Activated T-helper 1 cell treated with anti-CD3 and anti-CD28 coated beads, Interleukin-12 subunit alpha, Interleukin-12 subunit beta, Interleukin-2, Interleukin-4 antibody, amounts not matched to agents 30 ng/mL and 10 ng/mL and 1 ng/mL, durations not matched to agents 14 hours and 24 hours and 36 hours (primary cell): ENCODE measurements at regions of chr1 and their contacts with region 1.

Region 1: GRCh38 chr1:224113918-224114786 is at the start of gene FBXO28:
- DNase-seq: peak; percentile 90
- H3K4me3 Mint-ChIP-seq: peak within 1 kb of the TSS; percentile 91
- H3K27ac Mint-ChIP-seq: peak within 1 kb of the TSS; percentile 89
- H3K4me1 Mint-ChIP-seq: peaks cover 27% of the 10 kb centered on the region
- H3K27me3 Mint-ChIP-seq: peaks cover 19% of the 10 kb centered on the region
- total RNA-seq, gene FBXO28: 29.3 and 32.2 TPM in 2 replicates

Region 2: GRCh38 chr1:223726380-223727001 is 387.7 kb before region 1 on chr1:
- intact Hi-C with region 1: loop called (anchors 10 kb)
- DNase-seq: peak; percentile 86
- H3K4me3 Mint-ChIP-seq: peak overlapping the region; percentile 77
- H3K27ac Mint-ChIP-seq: peak overlapping the region; percentile 95
- H3K4me1 Mint-ChIP-seq: peaks cover 85% of the 10 kb centered on the region
- H3K27me3 Mint-ChIP-seq: no peaks in the 10 kb centered on the region

Region 3: GRCh38 chr1:224168859-224169380 is 54.8 kb after region 1 on chr1:
- intact Hi-C with region 1: loop called (anchors 1 kb)
- DNase-seq: peak; percentile 59
- H3K4me3 Mint-ChIP-seq: peak overlapping the region; percentile 60
- H3K27ac Mint-ChIP-seq: peak overlapping the region; percentile 76
- H3K4me1 Mint-ChIP-seq: peaks cover 38% of the 10 kb centered on the region
- H3K27me3 Mint-ChIP-seq: peaks cover 2% of the 10 kb centered on the region

Region 4: DNA sequence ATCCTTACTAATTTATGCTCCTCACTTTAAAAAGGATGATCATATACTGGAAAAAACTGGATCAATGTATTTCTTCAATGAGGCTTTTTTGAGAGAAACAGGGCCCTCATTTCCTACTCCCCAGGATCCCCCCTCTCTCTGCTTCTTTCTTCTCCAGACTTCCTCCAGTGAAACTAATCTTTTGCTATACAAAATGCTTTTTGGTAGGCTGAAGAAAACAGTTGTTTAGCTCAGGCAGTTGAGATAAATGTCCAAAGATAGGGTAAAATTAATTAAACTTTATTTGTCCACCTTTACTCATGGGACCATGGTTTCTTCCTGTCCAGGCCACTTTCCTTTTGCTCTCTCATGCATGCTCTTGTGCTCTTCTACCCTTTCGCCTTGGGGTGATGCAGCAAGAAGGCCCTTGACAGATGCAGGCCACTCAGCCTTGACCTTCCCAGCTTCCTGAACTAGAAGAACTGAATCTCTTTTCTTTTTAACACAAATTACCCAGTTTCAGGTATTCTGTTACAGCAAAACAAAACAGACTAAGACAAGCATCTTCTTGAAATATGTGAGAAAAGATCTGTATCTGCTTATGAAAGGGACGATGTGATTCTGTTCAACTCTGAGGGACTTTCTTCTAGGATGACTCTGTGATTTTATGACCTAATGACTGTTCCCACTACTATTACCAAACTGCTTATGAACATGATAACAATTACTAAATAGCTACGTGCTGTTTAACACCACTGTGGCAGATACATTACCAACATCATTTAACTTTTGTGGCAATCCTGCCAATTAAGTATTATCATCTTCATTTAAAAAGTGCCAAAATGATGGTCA is 152.2 kb after region 1 on chr1:
- intact Hi-C with region 1: loop called (anchors 10 kb)
- DNase-seq: no peak
- H3K4me3 Mint-ChIP-seq: no peak overlapping the region
- H3K27ac Mint-ChIP-seq: peak overlapping the region; percentile 69
- H3K4me1 Mint-ChIP-seq: peaks cover 42% of the 10 kb centered on the region
- H3K27me3 Mint-ChIP-seq: no peaks in the 10 kb centered on the region

Region 5: DNA sequence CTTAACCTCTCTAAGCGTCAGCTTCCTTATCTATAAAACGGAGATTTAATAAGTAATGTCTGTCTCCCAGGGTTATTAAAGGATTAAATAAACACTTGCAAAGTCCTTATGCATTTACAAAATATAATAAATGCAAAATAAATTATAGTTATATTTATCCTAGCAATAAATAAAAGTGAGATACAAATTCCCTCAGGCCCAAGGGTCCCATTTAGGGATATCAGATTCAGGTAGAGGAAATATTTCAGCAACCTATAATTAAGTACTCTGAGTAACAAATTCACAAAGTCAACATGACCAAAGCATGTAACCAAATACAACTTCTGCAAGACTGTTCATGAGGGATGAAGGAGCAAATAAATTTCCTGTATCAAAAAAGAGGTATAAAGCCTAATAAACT is 197.9 kb after region 1 on chr1:
- intact Hi-C with region 1: no loop called
- DNase-seq: no peak
- H3K4me3 Mint-ChIP-seq: no peak overlapping the region
- H3K27ac Mint-ChIP-seq: no peak overlapping the region
- H3K4me1 Mint-ChIP-seq: no peaks in the 10 kb centered on the region
- H3K27me3 Mint-ChIP-seq: no peaks in the 10 kb centered on the region

Region 6: DNA sequence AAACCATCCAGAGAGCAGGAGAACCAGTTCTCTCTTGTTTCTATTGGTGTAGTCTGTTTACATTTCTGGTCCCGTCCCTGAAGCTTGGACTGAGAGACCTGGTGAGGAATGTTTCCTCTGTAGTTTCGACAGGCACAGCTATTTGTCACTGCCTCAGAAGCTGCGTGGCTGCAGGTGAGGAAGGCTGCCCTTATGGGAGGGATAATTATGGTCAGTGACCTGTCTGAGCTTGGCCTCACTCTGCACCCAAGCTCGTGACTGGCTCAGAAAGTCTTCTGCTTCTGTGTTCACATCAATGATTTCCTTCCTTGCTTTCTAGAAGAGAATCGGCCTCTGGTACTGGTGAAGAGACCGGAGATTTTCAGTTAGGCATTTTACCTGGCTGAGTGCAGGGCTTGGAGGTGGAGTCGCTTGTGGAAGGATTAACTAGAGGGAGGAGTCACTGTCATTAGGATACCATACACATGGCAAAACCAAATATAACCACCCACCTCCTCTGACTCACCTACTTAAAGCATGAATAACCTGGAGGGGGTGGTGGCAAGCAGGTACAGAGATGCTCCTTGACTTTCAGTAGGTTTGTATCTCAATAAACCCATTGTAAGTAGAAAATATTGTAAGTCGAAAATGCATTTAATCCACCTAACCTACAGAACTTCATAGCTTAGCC is 340.4 kb after region 1 on chr1:
- intact Hi-C with region 1: loop called (anchors 1 kb)
- DNase-seq: no peak
- H3K4me3 Mint-ChIP-seq: no peak overlapping the region
- H3K27ac Mint-ChIP-seq: no peak overlapping the region
- H3K4me1 Mint-ChIP-seq: peaks cover 31% of the 10 kb centered on the region
- H3K27me3 Mint-ChIP-seq: no peaks in the 10 kb centered on the region